PC-9 (cell line): ENCODE measurements at regions of chr7 and their contacts with region 1.

Region 1: DNA sequence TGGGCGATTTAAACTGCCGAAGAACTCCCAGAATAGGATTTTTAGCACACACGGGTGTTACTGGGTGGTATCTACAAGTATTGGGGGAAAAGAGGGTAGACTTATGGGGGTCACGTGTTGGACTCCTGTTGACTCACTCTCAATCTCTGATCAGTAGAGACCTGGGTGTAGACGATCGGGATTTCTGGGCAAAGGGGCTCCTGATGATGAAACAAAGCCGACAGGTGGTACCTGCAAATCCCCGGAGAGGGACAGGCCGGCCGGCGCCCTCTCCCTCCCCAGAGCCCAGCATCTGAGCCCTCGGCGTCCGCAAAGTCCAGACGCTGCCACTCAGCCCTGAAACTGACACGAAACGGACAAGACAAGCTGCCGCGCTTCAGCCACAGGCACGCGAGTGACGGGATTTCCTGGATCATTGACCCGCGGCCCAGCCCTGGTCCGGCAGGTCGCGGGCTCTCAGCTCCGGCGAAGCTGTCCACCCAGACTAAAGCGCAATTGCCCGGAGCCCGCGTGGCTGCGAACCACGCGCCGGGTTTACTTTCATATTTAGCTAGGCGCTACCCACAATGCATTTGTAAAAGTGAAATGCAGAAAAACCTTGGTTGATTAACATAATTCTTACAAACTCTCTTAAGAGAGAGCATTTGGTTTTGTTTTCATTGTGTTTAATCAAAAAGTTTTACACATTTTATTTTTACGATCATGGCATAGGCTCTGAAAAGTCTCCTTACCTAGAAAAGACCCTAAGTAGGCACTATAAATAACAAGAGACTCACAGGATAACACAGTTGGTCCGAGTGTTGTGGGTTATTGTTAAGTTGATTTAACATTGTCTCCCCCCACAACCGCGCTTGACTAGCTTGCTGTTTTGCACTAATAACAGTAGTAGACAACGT is 56.9 kb upstream of the EZH2 start:
- DNase-seq: peak; percentile 63 to 72
- H3K4me3 ChIP-seq: peak overlapping the region; percentile 74
- H3K27ac ChIP-seq: peak overlapping the region; percentile 84
- H3K4me1 ChIP-seq: peaks cover 27% of the 10 kb centered on the region
- H3K27me3 ChIP-seq: no peaks in the 10 kb centered on the region
- CTCF ChIP-seq: no peak

Region 2: GRCh38 chr7:148698397-148699023 is 242.4 kb before region 1 on chr7 and contains the start of gene CUL1:
- CTCF ChIA-PET with region 1: no interaction called
- POLR2A ChIA-PET with region 1: interaction called, 5 read pairs
- intact Hi-C with region 1: loop called (anchors 2 kb)
- DNase-seq: peak; percentile 64 to 92
- H3K4me3 ChIP-seq: peak within 1 kb of the TSS; percentile 76
- H3K27ac ChIP-seq: peak within 1 kb of the TSS; percentile 79
- H3K4me1 ChIP-seq: peaks cover 39% of the 10 kb centered on the region
- H3K27me3 ChIP-seq: no peaks in the 10 kb centered on the region
- CTCF ChIP-seq: no peak
- total RNA-seq, gene CUL1: 54.7 and 78.3 TPM in 2 replicates

Region 3: GRCh38 chr7:148819697-148820360 is 121.1 kb before region 1 on chr7:
- CTCF ChIA-PET with region 1: no interaction called
- POLR2A ChIA-PET with region 1: interaction called, 13 read pairs
- intact Hi-C with region 1: no loop called
- DNase-seq: peak in 1 of 2 experiments; percentile 40
- H3K4me3 ChIP-seq: no peak overlapping the region
- H3K27ac ChIP-seq: peak overlapping the region; percentile 15; the same call in 1 of the 2 replicates
- H3K4me1 ChIP-seq: peaks cover 6% of the 10 kb centered on the region; the same call in 1 of the 2 replicates
- H3K27me3 ChIP-seq: no peaks in the 10 kb centered on the region
- CTCF ChIP-seq: no peak

Region 4: DNA sequence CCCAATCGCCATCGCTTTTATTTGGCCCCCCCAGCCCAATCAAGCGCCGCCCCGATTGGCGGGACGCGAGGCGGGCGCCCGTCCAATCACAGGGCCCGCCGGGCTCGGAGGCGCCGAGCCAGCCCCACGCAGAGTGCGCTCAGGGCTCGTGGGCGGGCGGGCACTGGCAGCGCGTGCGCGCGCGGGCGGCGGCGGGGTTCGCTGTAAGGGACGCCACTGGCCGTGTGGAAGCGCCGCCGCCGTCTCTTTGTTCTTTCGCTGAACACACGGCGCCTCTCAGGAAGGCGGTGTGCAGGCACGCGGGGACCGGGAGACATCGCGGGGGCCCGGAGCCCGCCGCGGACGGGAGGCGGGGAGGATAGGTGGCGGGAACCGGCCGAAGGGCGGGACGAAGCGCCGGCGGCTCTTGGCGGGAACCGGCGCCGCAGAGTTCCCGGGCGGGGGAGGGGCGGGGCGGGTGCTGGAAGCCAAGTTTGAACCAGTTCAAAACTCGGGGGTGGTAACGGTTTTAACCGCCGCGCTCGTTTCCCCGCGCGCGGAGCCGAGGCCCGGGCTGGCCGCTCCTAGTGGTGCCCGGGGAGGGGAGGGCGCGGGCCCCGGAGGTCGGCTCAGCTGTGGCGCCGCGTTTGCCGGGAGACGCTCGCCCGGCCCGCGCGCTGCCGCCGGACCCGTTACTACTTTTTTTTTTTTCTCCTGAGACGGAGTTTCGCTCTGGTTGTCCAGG is 56.5 kb before region 1 on chr7:
- CTCF ChIA-PET with region 1: no interaction called
- POLR2A ChIA-PET with region 1: interaction called, 3 read pairs
- intact Hi-C with region 1: loop called (anchors 1 kb)
- DNase-seq: peak; percentile 75 to 96
- H3K4me3 ChIP-seq: peak overlapping the region; percentile 88
- H3K27ac ChIP-seq: peak overlapping the region; percentile 68
- H3K4me1 ChIP-seq: peaks cover 14% of the 10 kb centered on the region
- H3K27me3 ChIP-seq: no peaks in the 10 kb centered on the region
- CTCF ChIP-seq: no peak

Region 5: GRCh38 chr7:148914208-148914777 is 26.7 kb before region 1 on chr7:
- CTCF ChIA-PET with region 1: interaction called, 9 read pairs
- POLR2A ChIA-PET with region 1: no interaction called
- intact Hi-C with region 1: loop called (anchors 2 kb)
- DNase-seq: peak; percentile 45 to 80
- H3K4me3 ChIP-seq: peak overlapping the region; percentile 16; the same call in 1 of the 2 replicates
- H3K27ac ChIP-seq: peak overlapping the region; percentile 69
- H3K4me1 ChIP-seq: peaks cover 25% of the 10 kb centered on the region
- H3K27me3 ChIP-seq: no peaks in the 10 kb centered on the region
- CTCF ChIP-seq: no peak

Region 6: GRCh38 chr7:148927123-148928045 is 13.6 kb before region 1 on chr7:
- CTCF ChIA-PET with region 1: no interaction called
- POLR2A ChIA-PET with region 1: no interaction called
- intact Hi-C with region 1: no loop called
- DNase-seq: no peak
- H3K4me3 ChIP-seq: no peak overlapping the region
- H3K27ac ChIP-seq: no peak overlapping the region
- H3K4me1 ChIP-seq: no peaks in the 10 kb centered on the region
- H3K27me3 ChIP-seq: no peaks in the 10 kb centered on the region
- CTCF ChIP-seq: no peak

Region 7: DNA sequence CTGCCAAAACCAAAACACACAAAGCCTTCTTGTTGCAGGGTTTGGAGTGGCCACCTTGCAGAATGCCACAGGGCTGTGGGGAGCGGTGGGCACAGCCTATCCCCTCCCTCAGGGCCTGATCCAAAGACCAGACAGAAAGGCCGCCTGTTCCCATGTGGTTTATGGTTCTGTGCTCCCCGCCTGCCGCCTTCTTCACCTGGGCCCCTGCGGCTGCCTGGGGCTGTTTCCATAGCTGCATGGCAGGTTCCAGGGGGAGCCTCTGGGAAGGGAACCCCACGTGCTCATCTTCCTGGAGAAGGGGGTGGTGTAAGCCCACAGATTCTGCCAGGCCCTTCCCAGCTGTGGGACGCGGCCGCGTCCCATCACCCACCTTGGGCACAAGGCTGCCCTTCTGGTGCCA is 13.8 kb after region 1 on chr7:
- CTCF ChIA-PET with region 1: no interaction called
- POLR2A ChIA-PET with region 1: no interaction called
- intact Hi-C with region 1: no loop called
- DNase-seq: no peak
- H3K4me3 ChIP-seq: no peak overlapping the region
- H3K27ac ChIP-seq: no peak overlapping the region
- H3K4me1 ChIP-seq: no peaks in the 10 kb centered on the region
- H3K27me3 ChIP-seq: no peaks in the 10 kb centered on the region
- CTCF ChIP-seq: no peak

Region 8: GRCh38 chr7:148987010-148987750 is 46.2 kb after region 1 on chr7:
- CTCF ChIA-PET with region 1: interaction called, 4 read pairs
- POLR2A ChIA-PET with region 1: no interaction called
- intact Hi-C with region 1: loop called (anchors 2 kb)
- DNase-seq: peak; percentile 86 to 91
- H3K4me3 ChIP-seq: peak overlapping the region; percentile 88
- H3K27ac ChIP-seq: peak overlapping the region; percentile 78
- H3K4me1 ChIP-seq: peaks cover 46% of the 10 kb centered on the region
- H3K27me3 ChIP-seq: no peaks in the 10 kb centered on the region
- CTCF ChIP-seq: no peak

Region 9: DNA sequence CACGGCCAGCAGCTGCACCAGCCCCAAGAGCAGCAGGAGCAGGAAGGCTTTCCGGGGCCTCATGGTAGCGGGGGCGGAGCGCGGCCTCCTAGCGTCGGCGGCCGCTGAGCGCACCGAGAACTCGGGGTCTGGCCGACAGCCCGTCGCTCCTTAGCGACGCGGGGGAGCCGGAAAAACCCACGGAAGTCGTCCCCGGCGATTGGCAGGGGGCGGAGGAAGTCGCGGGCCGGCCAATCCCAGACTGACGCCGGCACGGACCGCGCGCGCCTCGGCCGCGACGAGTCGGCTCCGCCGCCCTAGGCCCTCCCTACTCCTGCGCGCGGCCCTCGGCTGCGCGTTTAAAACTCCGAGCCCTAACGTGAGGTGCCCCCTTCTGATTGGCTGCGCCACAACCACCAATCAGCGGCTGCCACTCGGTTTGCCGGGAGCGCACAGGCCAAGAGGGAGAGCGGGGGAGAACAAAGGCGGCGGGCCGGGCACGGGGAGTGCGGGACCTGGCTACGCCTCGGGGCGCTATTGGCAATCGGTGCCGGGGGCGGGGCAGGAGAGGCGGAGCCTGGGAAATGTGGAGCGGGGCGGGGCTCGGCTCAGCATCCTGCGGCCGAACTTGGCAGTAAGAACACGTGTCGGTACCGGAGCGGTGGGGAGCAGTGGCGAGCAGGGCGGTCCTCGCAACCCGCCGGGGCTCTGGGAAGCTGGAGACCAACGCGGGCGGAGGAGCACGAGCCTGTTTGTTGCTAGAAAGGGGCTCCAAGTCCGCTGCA is 87.6 kb after region 1 on chr7 and contains the start of gene PDIA4:
- CTCF ChIA-PET with region 1: no interaction called
- POLR2A ChIA-PET with region 1: no interaction called
- intact Hi-C with region 1: no loop called
- DNase-seq: peak; percentile 98 to 100
- H3K4me3 ChIP-seq: peak within 1 kb of the TSS; percentile 73
- H3K27ac ChIP-seq: peak within 1 kb of the TSS; percentile 78
- H3K4me1 ChIP-seq: peaks cover 24% of the 10 kb centered on the region
- H3K27me3 ChIP-seq: no peaks in the 10 kb centered on the region
- CTCF ChIP-seq: peak; percentile 17; the same call in 1 of the 2 replicates
- total RNA-seq, gene PDIA4: 200 and 221 TPM in 2 replicates

Region 10: GRCh38 chr7:149067876-149068275 is 126.9 kb after region 1 on chr7:
- CTCF ChIA-PET with region 1: no interaction called
- POLR2A ChIA-PET with region 1: no interaction called
- intact Hi-C with region 1: loop called (anchors 1 kb)
- DNase-seq: no peak
- H3K4me3 ChIP-seq: no peak overlapping the region
- H3K27ac ChIP-seq: no peak overlapping the region
- H3K4me1 ChIP-seq: peaks cover 4% of the 10 kb centered on the region; the same call in 1 of the 2 replicates
- H3K27me3 ChIP-seq: no peaks in the 10 kb centered on the region
- CTCF ChIP-seq: peak; percentile 47; the same call in 1 of the 2 replicates

Region 11: GRCh38 chr7:149330914-149331567 is 390.1 kb after region 1 on chr7:
- CTCF ChIA-PET with region 1: no interaction called
- POLR2A ChIA-PET with region 1: no interaction called
- intact Hi-C with region 1: no loop called
- DNase-seq: peak; percentile 44 to 53
- H3K4me3 ChIP-seq: no peak overlapping the region
- H3K27ac ChIP-seq: no peak overlapping the region
- H3K4me1 ChIP-seq: peaks cover 12% of the 10 kb centered on the region
- H3K27me3 ChIP-seq: no peaks in the 10 kb centered on the region
- CTCF ChIP-seq: no peak